Posterior vena cava (tissue), 2 donors: ENCODE measurements at regions of chr12 and their contacts with region 1.

Region 1: GRCh38 chr12:111396726-111397445 is 8.8 kb upstream of the SH2B3 start:
- DNase-seq: peak; percentile 96

Region 2: DNA sequence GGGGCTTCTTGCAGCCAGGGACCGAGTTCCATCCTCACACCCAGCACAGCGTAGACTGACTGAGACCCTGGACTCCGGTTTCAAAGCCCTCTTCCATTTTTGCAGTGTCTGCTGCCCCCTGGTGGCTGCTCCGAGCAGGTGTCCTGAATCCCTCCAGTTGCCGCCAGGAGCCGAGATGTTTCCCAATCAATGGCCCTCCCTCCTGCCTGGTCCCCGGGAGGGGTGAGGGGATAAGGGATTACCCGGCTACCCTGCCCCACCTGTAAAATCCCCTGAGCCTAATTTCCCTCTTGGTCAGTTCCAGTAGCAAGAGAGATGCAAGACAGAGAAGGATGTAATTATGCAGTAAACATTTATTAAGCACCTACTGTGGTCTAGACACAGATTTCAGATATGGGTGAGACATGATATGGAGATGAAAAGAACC is 83.0 kb before region 1 on chr12:
- intact Hi-C with region 1: no loop called
- DNase-seq: peak; percentile 93

Region 3: GRCh38 chr12:111428728-111429175 is 31.9 kb after region 1 on chr12:
- intact Hi-C with region 1: loop called in 1 of 2 experiments (anchors 2 kb)
- DNase-seq: peak; percentile 89

Region 4: DNA sequence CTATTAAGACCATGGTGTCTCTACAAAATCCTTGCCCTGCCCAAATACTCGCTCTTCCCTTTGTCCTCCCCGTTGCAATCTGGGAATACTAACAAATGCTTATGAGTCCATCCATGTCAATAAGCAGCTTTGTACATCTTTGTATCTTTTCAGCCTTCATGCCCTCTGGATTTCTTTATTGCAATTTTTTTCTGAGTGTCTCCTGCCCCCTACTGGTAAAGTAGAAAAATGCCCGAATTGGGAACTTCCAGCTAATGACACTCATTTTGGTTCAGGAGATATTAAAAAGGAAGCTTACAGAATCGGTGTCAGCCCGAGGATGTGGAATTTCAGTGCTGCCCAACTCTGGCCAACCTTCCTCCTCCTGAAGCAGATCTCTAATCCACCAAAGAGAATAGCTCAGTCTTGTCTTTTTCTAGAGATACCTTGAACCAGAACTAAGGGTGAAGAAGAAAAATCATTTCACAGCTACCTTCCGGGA is 54.8 kb after region 1 on chr12:
- intact Hi-C with region 1: loop called (anchors 2 to 5 kb)
- DNase-seq: no peak

Region 5: GRCh38 chr12:111819191-111820150 is 422.6 kb after region 1 on chr12:
- intact Hi-C with region 1: no loop called
- DNase-seq: no peak